Psoas muscle (tissue), 8 donors: ENCODE measurements at regions of chr12 and their contacts with region 1.

Region 1: DNA sequence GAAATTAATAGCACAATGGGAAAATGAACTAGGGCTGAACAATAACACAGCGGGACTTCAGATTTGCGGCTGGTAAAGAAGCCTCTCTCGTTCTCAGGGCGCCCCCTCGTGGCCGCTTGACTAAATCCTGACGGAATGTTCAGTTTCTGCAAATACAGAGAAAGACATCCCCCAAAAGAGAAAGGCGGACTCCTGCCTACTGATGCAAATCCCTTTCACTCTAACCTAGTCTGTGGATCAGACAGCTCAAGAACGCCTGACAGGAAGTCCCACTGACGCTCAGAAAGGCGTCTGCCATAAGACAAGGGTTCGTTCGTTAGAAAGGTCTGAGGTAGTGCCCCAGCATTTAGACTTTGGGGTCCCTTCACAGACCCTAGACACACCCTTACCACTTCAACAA is 2.5 kb downstream of the NUAK1 start:
- DNase-seq: peak; percentile 88 to 93
- ATAC-seq: peak in 1 of 4 donors; percentile 28
- H3K4me3 ChIP-seq: peak overlapping the region; percentile 91
- H3K27ac ChIP-seq: peak overlapping the region; percentile 98
- H3K4me1 ChIP-seq: peaks cover 65% of the 10 kb centered on the region
- H3K27me3 ChIP-seq: no peaks in the 10 kb centered on the region
- CTCF ChIP-seq: peak; percentile 91

Region 2: DNA sequence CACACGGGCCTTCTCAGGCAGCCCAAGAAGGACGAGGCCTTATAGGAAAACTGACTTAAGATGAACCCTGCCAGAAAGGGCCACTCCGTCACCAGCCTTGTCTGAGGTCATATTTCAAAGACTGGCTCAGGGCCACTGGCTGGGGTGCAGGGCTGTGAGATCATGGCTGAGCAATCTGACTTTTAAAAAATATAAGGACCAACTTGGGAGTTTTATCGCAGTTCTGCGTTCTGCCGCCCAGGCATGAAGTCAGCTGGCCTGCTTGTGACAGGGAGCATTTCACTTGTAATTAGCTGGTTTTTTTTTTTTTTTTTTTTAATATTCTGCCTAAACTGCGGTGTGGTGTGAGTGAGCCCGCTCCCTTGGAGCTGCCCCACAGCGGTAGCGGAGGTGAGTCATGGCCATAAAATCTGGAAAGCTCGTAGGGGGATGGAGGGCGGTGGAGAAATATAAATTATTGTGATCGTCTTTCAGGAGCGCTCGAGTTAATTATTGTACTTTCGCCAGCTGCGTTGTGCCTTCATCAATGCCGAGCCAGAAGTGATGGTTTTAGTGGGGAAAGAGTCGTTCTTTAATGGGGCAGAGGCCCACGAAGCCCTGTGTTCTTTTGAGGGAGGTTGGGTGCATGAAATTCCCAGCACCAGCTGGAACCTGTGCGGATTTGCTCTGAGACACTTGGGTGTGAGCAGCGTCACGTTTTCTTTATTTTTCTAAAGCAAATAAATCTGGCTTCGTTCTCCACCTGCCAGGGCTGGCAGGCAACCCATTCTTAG is 573.9 kb before region 1 on chr12:
- intact Hi-C with region 1: loop called in 1 of 2 experiments (anchors 10 kb)
- DNase-seq: peak; percentile 56 to 82
- ATAC-seq: peak; percentile 91 to 94 (median 92)
- H3K4me3 ChIP-seq: peak overlapping the region; percentile 54
- H3K27ac ChIP-seq: peak overlapping the region; percentile 77
- H3K4me1 ChIP-seq: peaks cover 10% of the 10 kb centered on the region
- H3K27me3 ChIP-seq: no peaks in the 10 kb centered on the region
- CTCF ChIP-seq: no peak

Region 3: GRCh38 chr12:105934274-105934673 is 202.0 kb before region 1 on chr12:
- intact Hi-C with region 1: loop called in 1 of 2 experiments (anchors 5 kb)
- DNase-seq: peak; percentile 51 to 73
- ATAC-seq: peak; percentile 80 to 91 (median 88)
- H3K4me3 ChIP-seq: no peak overlapping the region
- H3K27ac ChIP-seq: peak overlapping the region; percentile 34
- H3K4me1 ChIP-seq: peaks cover 22% of the 10 kb centered on the region
- H3K27me3 ChIP-seq: no peaks in the 10 kb centered on the region
- CTCF ChIP-seq: no peak

Region 4: GRCh38 chr12:106078358-106079010 is 57.8 kb before region 1 on chr12:
- intact Hi-C with region 1: loop called in 1 of 2 experiments (anchors 5 kb)
- DNase-seq: peak; percentile 78 to 92
- ATAC-seq: peak; percentile 90 to 98 (median 96)
- H3K4me3 ChIP-seq: no peak overlapping the region
- H3K27ac ChIP-seq: no peak overlapping the region
- H3K4me1 ChIP-seq: peaks cover 16% of the 10 kb centered on the region
- H3K27me3 ChIP-seq: no peaks in the 10 kb centered on the region
- CTCF ChIP-seq: no peak